ENCODE measurements at regions of chr13 and their contacts with region 1.

Region 1: DNA sequence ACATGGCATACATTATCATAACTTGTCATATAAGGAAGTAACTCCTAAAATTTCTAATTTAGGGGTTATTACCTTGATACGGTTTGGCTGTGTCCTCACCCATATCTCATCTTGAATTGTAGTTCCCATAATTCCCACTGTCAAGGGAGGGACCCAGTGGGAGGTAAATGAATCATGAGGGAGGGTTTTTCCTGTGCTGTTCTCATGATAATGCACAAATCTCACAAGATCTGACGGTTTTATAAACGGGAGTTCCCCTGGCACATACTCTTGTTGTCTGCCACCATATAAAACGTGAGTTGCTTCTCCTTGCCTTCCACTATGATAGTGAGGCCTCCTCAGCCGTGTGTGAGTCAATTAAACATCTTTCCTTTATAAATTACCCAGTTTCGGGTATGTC is 76.0 kb downstream of the ZDHHC20 start:
- DNase-seq: no peak
- H3K27ac ChIP-seq: no peak overlapping the region
- CTCF ChIP-seq: no peak

Region 2: DNA sequence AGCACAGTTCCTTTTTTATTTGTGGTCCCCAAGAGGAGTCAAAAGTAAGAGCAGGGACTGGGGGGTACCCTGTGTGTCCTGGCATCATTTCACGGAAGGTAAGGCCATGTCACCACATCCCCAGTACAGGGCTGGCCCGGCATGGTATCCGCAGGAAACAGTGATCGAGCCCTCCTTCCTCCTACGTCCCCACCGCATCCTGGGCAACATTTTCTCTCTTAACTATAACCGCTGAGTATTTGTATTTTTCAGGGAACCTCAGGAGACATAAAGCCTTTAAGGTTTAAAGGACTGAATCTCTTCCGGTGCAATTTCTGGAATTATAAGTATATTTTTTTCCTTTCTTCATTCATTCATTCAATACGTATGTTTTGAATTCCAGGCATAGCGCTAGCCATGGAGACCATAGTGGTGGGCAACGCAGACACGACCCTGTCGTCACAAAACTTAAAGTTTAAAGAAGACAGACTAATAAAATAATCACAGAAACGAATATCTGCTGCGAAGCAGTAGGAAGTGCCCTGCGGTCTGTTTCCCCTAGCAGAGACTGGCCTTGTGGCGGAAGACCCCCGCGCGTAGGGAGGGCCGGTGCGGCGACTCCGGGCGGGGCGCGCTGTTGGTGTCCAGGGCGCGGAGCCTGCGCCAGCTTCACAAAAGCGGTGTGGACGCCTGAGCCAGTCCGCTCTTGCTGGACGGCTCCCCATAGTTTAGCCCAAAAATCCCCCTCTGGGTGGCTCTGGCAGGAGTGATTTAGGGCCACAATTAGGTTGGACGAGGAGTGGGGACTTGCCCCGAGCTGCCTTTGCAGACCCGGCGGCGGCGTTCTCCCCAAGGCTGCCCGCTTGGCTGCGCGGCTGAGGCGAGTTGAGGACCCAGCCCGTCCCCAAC is 307.8 kb before region 1 on chr13:
- CTCF ChIA-PET with region 1: no interaction called
- POLR2A ChIA-PET with region 1: no interaction called
- DNase-seq: no peak
- H3K27ac ChIP-seq: peak overlapping the region; percentile 34
- CTCF ChIP-seq: no peak

Region 3: DNA sequence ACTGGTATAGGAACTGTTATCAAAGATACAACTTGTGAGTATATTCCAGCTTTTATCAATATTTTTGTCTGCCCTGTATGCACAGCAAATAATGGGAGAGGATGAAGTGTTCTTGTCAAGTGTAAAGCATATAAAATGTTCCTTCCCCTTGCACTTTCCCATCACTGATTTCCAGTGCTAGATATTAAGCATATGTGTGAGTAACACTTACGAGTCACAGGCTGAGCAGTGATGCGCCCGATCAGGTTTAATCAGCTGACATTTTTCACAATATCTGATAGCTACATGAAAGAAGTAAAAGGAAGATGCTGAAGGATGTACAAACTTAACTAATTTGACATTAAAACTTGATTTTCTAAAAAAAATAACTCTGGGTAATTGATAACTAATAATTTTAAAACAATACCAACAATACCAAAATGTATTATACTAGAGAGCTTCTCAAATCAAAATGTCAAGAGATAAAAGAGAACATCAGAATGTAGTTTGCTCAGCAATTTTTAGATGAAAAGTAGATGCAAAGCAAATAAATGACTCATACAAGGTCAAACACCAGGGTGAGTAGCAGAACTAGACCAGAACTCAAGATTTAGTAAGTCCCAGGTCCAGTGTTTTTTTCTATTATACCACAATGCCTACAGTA is 19.6 kb after region 1 on chr13:
- CTCF ChIA-PET with region 1: interaction called, 3 read pairs
- POLR2A ChIA-PET with region 1: interaction called, 17 read pairs
- DNase-seq: peak; percentile 17
- H3K27ac ChIP-seq: no peak overlapping the region
- CTCF ChIP-seq: no peak

Region 4: GRCh38 chr13:21426238-21426637 is 43.1 kb after region 1 on chr13:
- CTCF ChIA-PET with region 1: no interaction called
- POLR2A ChIA-PET with region 1: no interaction called
- DNase-seq: no peak
- H3K27ac ChIP-seq: no peak overlapping the region
- CTCF ChIP-seq: no peak

Region 5: GRCh38 chr13:21777813-21778212 is 394.7 kb after region 1 on chr13:
- CTCF ChIA-PET with region 1: no interaction called
- POLR2A ChIA-PET with region 1: no interaction called
- DNase-seq: no peak
- H3K27ac ChIP-seq: no peak overlapping the region
- CTCF ChIP-seq: no peak